Uterus (tissue), 4 donors: ENCODE measurements at regions of chr15 and their contacts with region 1.

Region 1: DNA sequence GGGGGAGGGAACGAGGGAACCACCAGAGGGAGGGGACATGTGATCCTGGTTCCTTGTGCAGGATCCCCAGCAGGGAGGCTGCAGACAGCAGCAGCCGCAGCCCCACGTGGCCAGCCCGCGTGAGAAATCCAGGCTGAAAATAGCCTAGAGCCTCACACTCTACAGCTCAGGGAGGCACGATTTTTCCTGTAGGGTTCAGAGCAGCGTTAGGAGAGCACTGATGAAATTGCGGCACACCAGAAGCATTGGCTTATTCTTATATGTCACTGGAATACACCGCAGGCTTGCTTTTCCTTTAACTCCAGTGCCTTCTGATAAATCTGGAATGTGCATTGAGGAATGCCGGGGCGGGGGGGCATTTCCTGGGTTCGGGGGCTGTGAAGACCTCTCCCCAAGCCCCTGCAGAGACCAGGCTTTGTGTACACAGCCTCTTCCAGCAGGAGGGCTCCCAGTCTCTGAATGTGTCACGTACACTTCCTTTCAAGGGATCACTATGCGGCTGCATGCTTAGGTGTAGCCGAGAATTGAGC is 193.0 kb downstream of the ATP10A start:
- DNase-seq: peak; percentile 64 to 85
- H3K4me3 ChIP-seq: no peak overlapping the region
- H3K27ac ChIP-seq: peak overlapping the region; percentile 37 to 61
- H3K4me1 ChIP-seq: no peaks in the 10 kb centered on the region
- H3K27me3 ChIP-seq: no peaks in the 10 kb centered on the region
- CTCF ChIP-seq: no peak
- POLR2A ChIP-seq: no peak

Region 2: DNA sequence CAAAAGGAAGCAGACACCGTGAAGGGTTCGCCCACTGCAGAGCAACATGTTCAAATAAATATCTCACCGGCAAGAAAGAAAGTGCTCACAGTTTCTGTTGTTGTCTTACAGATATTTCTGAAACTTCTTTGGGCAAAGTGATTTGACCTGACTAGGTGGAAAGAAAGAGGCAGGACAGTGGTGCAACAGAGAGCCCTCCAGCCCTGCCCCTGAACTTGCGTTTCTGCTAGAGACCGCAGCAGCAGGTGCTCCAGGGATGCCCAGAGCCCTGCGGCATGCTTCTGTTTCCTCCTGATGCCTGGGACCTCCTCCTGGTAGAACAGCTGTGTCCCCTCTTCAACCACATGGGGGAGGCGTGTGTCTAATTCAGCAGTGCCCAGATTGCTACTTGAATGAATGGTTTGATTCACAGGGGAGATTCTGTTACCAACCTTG is 69.6 kb after region 1 on chr15:
- intact Hi-C with region 1: loop called (anchors 10 kb)
- DNase-seq: no peak
- H3K4me3 ChIP-seq: no peak overlapping the region
- H3K27ac ChIP-seq: no peak overlapping the region
- H3K4me1 ChIP-seq: no peaks in the 10 kb centered on the region
- H3K27me3 ChIP-seq: no peaks in the 10 kb centered on the region
- CTCF ChIP-seq: peak in 3 of 4 experiments; percentile 11 to 38 (median 33)
- POLR2A ChIP-seq: no peak

Region 3: GRCh38 chr15:25790000-25790660 is 120.0 kb after region 1 on chr15:
- intact Hi-C with region 1: no loop called
- DNase-seq: peak; percentile 70 to 78
- H3K4me3 ChIP-seq: no peak overlapping the region
- H3K27ac ChIP-seq: peak overlapping the region; percentile 59 to 73
- H3K4me1 ChIP-seq: peaks cover 0 to 12% of the 10 kb centered on the region in 2 donors
- H3K27me3 ChIP-seq: no peaks in the 10 kb centered on the region
- CTCF ChIP-seq: no peak
- POLR2A ChIP-seq: no peak